ENCODE measurements at regions of chr19 and their contacts with region 1.

Region 1: GRCh38 chr19:14472202-14472938 is 2.8 kb downstream of the PTGER1 start:
- DNase-seq: peak; percentile 90
- ATAC-seq: peak; percentile 28 to 76 (median 48)
- H3K4me3 ChIP-seq: no peak overlapping the region
- H3K4me3 Mint-ChIP-seq: peak overlapping the region; percentile 64
- H3K27ac ChIP-seq: no peak overlapping the region
- H3K27ac Mint-ChIP-seq: peak overlapping the region; percentile 11 to 99
- H3K4me1 ChIP-seq: peaks cover 52% of the 10 kb centered on the region
- H3K4me1 Mint-ChIP-seq: peaks cover 29 to 51% of the 10 kb centered on the region in 2 donors
- H3K27me3 ChIP-seq: peaks cover 11% of the 10 kb centered on the region
- H3K27me3 Mint-ChIP-seq: peaks cover 0 to 11% of the 10 kb centered on the region in 2 donors
- CTCF ChIP-seq: peak; percentile 99

Region 2: GRCh38 chr19:14369399-14370168 is 102.8 kb before region 1 on chr19:
- intact Hi-C with region 1: loop called (anchors 2 kb)
- DNase-seq: peak; percentile 83 to 96
- ATAC-seq: peak; percentile 62 to 85 (median 77)
- H3K4me3 ChIP-seq: peak overlapping the region; percentile 41
- H3K4me3 Mint-ChIP-seq: peak overlapping the region; percentile 91
- H3K27ac ChIP-seq: peak overlapping the region; percentile 99
- H3K27ac Mint-ChIP-seq: peak overlapping the region; percentile 90 to 100
- H3K4me1 ChIP-seq: peaks cover 98% of the 10 kb centered on the region
- H3K4me1 Mint-ChIP-seq: peaks cover 58 to 69% of the 10 kb centered on the region in 2 donors
- H3K27me3 ChIP-seq: no peaks in the 10 kb centered on the region
- H3K27me3 Mint-ChIP-seq: no peaks in the 10 kb centered on the region
- CTCF ChIP-seq: no peak

Region 3: DNA sequence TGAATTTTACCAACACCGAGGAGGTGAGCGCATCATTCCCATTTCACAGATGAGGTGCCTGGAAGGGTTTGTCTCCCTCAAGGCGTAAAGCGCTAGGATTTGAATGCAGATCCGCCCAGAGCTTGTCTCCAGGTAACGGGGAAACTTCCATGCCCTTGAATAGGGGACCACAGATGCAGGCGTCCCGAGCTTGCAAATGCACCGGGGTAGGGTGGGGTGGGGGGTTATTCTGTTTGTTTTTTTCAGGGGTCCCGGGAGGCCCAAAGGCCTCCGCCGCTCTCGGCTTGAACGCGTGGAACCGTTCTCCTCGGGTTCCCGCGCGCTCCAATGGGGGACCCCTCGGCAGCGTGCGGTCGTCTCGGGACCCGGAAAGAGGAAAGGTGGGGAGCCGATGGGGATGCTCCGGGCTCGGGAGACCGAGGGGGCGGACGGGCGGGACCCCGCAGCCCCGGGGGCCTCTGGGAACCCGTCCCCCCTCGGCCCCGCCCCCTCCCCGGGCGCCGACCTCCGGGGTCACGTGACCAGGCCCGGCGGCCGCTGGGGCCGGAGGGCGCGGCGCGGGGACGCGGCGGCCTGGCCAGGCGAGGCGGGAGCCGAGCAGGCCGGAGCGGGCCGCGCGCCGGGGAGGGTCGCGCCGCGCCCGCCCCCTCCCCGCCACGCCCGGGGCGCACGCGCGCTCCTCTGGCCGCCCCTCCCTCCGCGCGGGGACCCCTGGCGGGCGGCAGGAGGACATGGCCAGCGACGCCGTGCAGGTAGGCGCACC is 39.4 kb before region 1 on chr19 and contains the start of gene PKN1:
- intact Hi-C with region 1: loop called (anchors 1 kb)
- DNase-seq: peak; percentile 56 to 68
- ATAC-seq: peak in 2 of 3 donors; percentile 6 to 31
- H3K4me3 ChIP-seq: peak within 1 kb of the TSS; percentile 72
- H3K4me3 Mint-ChIP-seq: peak within 1 kb of the TSS; percentile 90
- H3K27ac ChIP-seq: peak within 1 kb of the TSS; percentile 79
- H3K27ac Mint-ChIP-seq: peak within 1 kb of the TSS; percentile 97 to 100
- H3K4me1 ChIP-seq: peaks cover 48% of the 10 kb centered on the region
- H3K4me1 Mint-ChIP-seq: peaks cover 25 to 38% of the 10 kb centered on the region in 2 donors
- H3K27me3 ChIP-seq: no peaks in the 10 kb centered on the region
- H3K27me3 Mint-ChIP-seq: no peaks in the 10 kb centered on the region
- CTCF ChIP-seq: no peak
- total RNA-seq, gene PKN1: 323 to 351 (median 350) TPM

Region 4: DNA sequence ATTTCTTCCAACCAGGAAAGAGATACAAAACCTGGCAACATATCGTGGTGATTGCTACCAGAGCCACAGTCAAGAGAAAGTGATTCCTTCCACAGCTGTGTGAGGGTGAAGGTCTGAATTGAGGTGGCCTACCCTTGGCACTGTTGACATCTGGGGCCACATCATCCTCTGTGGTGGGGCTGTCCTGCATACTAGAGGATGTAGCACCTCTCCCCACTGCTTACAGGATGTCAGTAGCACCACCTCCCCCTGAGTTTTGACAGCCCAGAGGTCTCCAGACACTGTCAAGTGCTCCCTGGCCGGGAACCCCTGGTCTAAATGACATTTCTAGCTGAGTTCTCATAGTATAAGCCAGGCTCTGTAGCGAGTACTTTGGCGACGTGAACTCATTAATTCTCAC is 12.7 kb before region 1 on chr19:
- intact Hi-C with region 1: loop called (anchors 1 kb)
- DNase-seq: peak; percentile 74 to 75
- ATAC-seq: peak; percentile 97 to 99 (median 99)
- H3K4me3 ChIP-seq: no peak overlapping the region
- H3K4me3 Mint-ChIP-seq: peak overlapping the region; percentile 82
- H3K27ac ChIP-seq: peak overlapping the region; percentile 76
- H3K27ac Mint-ChIP-seq: peak overlapping the region; percentile 64 to 72
- H3K4me1 ChIP-seq: peaks cover 28% of the 10 kb centered on the region
- H3K4me1 Mint-ChIP-seq: peaks cover 31 to 34% of the 10 kb centered on the region in 2 donors
- H3K27me3 ChIP-seq: no peaks in the 10 kb centered on the region
- H3K27me3 Mint-ChIP-seq: no peaks in the 10 kb centered on the region
- CTCF ChIP-seq: no peak

Measured in natural killer cell (primary cell).